ENCODE measurements at regions of chr3 and their contacts with region 1.

Region 1: GRCh38 chr3:22565393-22565792 is 637.7 kb upstream of the UBE2E2 start:
- DNase-seq: no peak
- H3K4me3 ChIP-seq: no peak overlapping the region
- H3K27ac ChIP-seq: no peak overlapping the region
- H3K4me1 ChIP-seq: no peaks in the 10 kb centered on the region
- H3K27me3 ChIP-seq: no peaks in the 10 kb centered on the region
- CTCF ChIP-seq: no peak
- EP300 ChIP-seq: no peak
- POLR2A ChIP-seq: no peak

Region 2: GRCh38 chr3:22419261-22419660 is 146.1 kb before region 1 on chr3:
- intact Hi-C with region 1: no loop called
- DNase-seq: no peak
- H3K4me3 ChIP-seq: no peak overlapping the region
- H3K27ac ChIP-seq: no peak overlapping the region
- H3K4me1 ChIP-seq: no peaks in the 10 kb centered on the region
- H3K27me3 ChIP-seq: no peaks in the 10 kb centered on the region
- CTCF ChIP-seq: no peak
- EP300 ChIP-seq: no peak
- POLR2A ChIP-seq: no peak

Region 3: DNA sequence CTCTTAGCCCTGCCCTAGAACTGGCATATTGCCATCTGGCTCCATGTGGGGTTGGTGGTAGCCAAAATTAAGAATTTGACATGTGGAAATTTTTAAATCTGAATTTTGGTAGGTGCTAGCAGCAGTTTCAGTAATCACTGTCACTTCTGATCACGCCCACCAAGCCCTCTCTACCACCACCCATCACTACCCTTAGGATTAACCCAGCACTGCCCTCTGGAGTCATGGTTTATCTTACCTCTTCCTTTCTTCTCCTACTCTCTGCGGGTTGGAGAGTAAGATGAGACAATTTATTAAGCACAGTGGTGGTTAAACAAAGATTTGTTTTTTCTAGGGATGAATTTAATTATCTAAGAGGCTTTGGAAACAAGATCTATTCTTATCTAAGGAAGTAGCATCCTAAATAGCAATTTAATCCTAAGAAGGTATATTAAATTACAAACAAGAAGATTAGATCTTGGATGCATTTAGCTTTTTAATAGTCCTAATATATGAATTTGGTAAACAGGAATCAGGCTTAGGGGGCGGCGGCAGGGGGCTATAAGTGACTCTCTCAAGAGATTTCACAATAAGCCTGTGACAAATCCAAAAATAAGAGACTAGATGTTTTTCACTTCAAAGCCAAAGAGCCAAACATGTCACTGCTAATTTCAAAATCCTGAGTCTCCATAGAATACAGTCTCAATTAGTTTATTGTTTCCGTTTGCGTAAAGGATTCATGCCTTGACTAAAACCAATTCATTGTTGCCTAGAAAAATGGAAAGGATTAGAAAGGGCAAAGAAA is 139.4 kb after region 1 on chr3:
- intact Hi-C with region 1: no loop called
- DNase-seq: no peak
- H3K4me3 ChIP-seq: no peak overlapping the region
- H3K27ac ChIP-seq: no peak overlapping the region
- H3K4me1 ChIP-seq: no peaks in the 10 kb centered on the region
- H3K27me3 ChIP-seq: no peaks in the 10 kb centered on the region
- CTCF ChIP-seq: no peak
- EP300 ChIP-seq: no peak
- POLR2A ChIP-seq: no peak

Region 4: GRCh38 chr3:22819209-22819608 is 253.8 kb after region 1 on chr3:
- intact Hi-C with region 1: no loop called
- DNase-seq: no peak
- H3K4me3 ChIP-seq: no peak overlapping the region
- H3K27ac ChIP-seq: no peak overlapping the region
- H3K4me1 ChIP-seq: no peaks in the 10 kb centered on the region
- H3K27me3 ChIP-seq: no peaks in the 10 kb centered on the region
- CTCF ChIP-seq: no peak
- EP300 ChIP-seq: no peak
- POLR2A ChIP-seq: no peak

Region 5: DNA sequence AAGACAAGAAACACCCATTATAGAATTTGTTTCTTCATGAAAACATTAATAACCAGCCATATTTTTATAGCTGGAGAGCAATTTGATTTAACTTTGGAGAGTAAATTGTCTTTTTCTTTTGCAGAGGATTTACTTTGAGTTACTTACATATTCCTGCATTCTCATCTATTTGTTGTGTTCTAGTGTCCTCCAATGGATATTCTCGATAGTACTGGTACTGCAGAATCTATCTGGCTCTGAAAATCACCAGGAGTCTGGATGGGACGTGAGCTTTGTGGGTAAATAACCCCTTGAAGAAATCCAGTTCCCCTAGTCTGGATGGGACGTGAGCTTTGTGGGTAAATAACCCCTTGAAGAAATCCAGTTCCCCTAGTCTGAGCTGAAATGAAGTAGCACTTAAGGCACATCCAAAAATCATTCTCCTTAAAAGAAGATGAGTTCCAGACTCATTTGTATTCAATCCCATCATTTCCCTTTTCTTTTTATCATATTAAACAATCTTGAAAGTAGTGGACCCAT is 343.7 kb after region 1 on chr3:
- intact Hi-C with region 1: loop called (anchors 10 kb)
- DNase-seq: no peak
- H3K4me3 ChIP-seq: no peak overlapping the region
- H3K27ac ChIP-seq: no peak overlapping the region
- H3K4me1 ChIP-seq: no peaks in the 10 kb centered on the region
- H3K27me3 ChIP-seq: no peaks in the 10 kb centered on the region
- CTCF ChIP-seq: peak in 2 of 3 experiments; percentile 40 to 46
- EP300 ChIP-seq: no peak
- POLR2A ChIP-seq: no peak

Region 6: GRCh38 chr3:23036728-23037127 is 471.3 kb after region 1 on chr3:
- intact Hi-C with region 1: no loop called
- DNase-seq: no peak
- H3K4me3 ChIP-seq: no peak overlapping the region
- H3K27ac ChIP-seq: no peak overlapping the region
- H3K4me1 ChIP-seq: peaks cover 0 to 21% (median 8%) of the 10 kb centered on the region in 4 donors
- H3K27me3 ChIP-seq: no peaks in the 10 kb centered on the region
- CTCF ChIP-seq: no peak
- EP300 ChIP-seq: no peak
- POLR2A ChIP-seq: no peak

Measured in esophagus muscularis mucosa (tissue), 4 donors.